ENCODE measurements at regions of chr18 and their contacts with region 1.

Region 1: DNA sequence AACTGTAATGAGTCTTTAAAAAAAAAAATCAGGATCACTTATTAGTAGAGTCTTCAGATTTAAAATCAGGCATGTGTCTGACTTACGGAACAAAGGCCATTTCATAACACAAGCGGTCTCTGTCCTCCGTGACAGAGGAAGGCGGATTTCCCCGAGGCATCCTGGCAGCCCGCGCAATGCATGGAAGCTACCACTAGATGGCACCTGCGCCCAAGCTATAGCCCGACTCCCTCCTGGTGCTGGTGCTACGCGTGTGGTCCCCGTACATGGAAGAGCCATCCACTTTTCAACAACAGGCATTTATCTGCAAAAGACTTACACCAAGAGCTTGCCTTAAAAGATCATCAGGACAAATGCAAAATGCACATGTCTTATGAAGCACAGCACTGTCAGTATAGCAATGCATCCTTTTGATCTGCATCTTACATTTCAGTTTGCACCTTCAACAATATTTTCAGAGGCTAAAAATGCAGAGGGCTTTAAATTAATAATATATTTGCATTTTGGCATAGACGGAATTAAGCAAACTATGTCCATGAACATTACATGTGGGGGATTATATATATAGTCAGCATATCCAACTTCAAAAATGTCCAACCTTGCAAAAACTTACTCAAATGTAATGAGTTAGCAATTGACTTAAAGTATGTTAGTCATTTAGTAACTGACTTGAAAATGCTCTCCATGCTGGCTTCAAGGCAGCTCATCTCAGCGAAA is 96.0 kb downstream of the ZNF516 start:
- DNase-seq: peak; percentile 82 to 90
- ATAC-seq: peak; percentile 92 to 96 (median 95)
- H3K4me3 ChIP-seq: no peak overlapping the region
- H3K27ac ChIP-seq: no peak overlapping the region
- H3K4me1 ChIP-seq: peaks cover 17% of the 10 kb centered on the region
- H3K27me3 ChIP-seq: no peaks in the 10 kb centered on the region
- CTCF ChIP-seq: peak; percentile 98

Region 2: GRCh38 chr18:76686737-76687262 is 287.7 kb after region 1 on chr18:
- intact Hi-C with region 1: loop called (anchors 1 to 5 kb)
- DNase-seq: peak; percentile 66 to 73
- ATAC-seq: peak; percentile 80 to 93 (median 82)
- H3K4me3 ChIP-seq: no peak overlapping the region
- H3K27ac ChIP-seq: no peak overlapping the region
- H3K4me1 ChIP-seq: peaks cover 4% of the 10 kb centered on the region
- H3K27me3 ChIP-seq: peaks cover 0 to 18% (median 2%) of the 10 kb centered on the region in 3 donors
- CTCF ChIP-seq: peak; percentile 64

Region 3: GRCh38 chr18:76709659-76710645 is 310.9 kb after region 1 on chr18:
- intact Hi-C with region 1: loop called (anchors 2 kb)
- DNase-seq: peak; percentile 66 to 73
- ATAC-seq: peak; percentile 79 to 93 (median 88)
- H3K4me3 ChIP-seq: peak overlapping the region; percentile 29
- H3K27ac ChIP-seq: no peak overlapping the region
- H3K4me1 ChIP-seq: no peaks in the 10 kb centered on the region
- H3K27me3 ChIP-seq: peaks cover 0 to under 1% (median 0%) of the 10 kb centered on the region in 3 donors
- CTCF ChIP-seq: peak; percentile 95

Region 4: GRCh38 chr18:76783759-76784484 is 384.9 kb after region 1 on chr18:
- intact Hi-C with region 1: no loop called
- DNase-seq: no peak
- ATAC-seq: no peak
- H3K4me3 ChIP-seq: no peak overlapping the region
- H3K27ac ChIP-seq: no peak overlapping the region
- H3K4me1 ChIP-seq: no peaks in the 10 kb centered on the region
- H3K27me3 ChIP-seq: peaks cover 0 to 19% (median 6%) of the 10 kb centered on the region in 3 donors
- CTCF ChIP-seq: no peak

Measured in psoas muscle (tissue), 8 donors.